Ovary (tissue), 10 donors: ENCODE measurements at regions of chr14 and their contacts with region 1.

Region 1: DNA sequence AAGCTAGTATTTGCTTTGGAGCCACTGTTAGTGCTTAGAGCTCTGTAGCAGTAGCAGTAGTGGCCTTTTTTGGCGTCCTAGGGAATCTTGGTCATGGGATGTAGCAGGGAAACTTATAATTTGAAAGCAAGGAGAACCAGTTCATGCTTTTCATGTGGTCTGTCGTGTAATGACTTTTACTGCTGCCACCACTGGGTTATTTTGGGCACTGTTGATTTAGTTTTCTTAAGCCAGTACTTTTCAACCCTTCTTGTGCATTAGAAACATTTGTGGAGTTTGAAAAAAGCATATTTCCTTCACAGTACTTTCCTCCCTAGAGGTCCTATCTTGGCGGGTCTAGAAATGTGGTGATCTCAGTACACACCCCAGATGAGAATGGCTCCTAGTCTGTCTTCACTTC is 49.7 kb downstream of the MARK3 start:
- DNase-seq: no peak
- H3K4me3 ChIP-seq: no peak overlapping the region
- H3K27ac ChIP-seq: no peak overlapping the region
- H3K4me1 ChIP-seq: peaks cover 1% of the 10 kb centered on the region
- H3K27me3 ChIP-seq: no peaks in the 10 kb centered on the region
- CTCF ChIP-seq: no peak
- EP300 ChIP-seq: no peak
- POLR2A ChIP-seq: no peak

Region 2: GRCh38 chr14:103385152-103385993 is 49.6 kb before region 1 on chr14 and contains the start of gene MARK3:
- intact Hi-C with region 1: no loop called
- DNase-seq: peak; percentile 97 to 99 (median 97)
- H3K4me3 ChIP-seq: peak within 1 kb of the TSS; percentile 68
- H3K27ac ChIP-seq: peak within 1 kb of the TSS; percentile 83 to 94
- H3K4me1 ChIP-seq: peaks cover 3% of the 10 kb centered on the region
- H3K27me3 ChIP-seq: no peaks in the 10 kb centered on the region
- CTCF ChIP-seq: peak in 1 of 3 donors; percentile 31
- EP300 ChIP-seq: no peak
- POLR2A ChIP-seq: peak; percentile 92
- total RNA-seq, gene MARK3: 63.8 to 110 (median 79.8) TPM

Region 3: GRCh38 chr14:103740991-103741689 is 306.2 kb after region 1 on chr14:
- intact Hi-C with region 1: loop called in 1 of 4 experiments (anchors 5 kb)
- DNase-seq: peak in 4 of 5 donors; percentile 56 to 76 (median 66)
- H3K4me3 ChIP-seq: no peak overlapping the region
- H3K27ac ChIP-seq: peak overlapping the region in 1 of 2 donors; percentile 34
- H3K4me1 ChIP-seq: peaks cover 25% of the 10 kb centered on the region
- H3K27me3 ChIP-seq: no peaks in the 10 kb centered on the region
- CTCF ChIP-seq: no peak
- EP300 ChIP-seq: no peak
- POLR2A ChIP-seq: no peak